ENCODE measurements at regions of chr22 and their contacts with region 1.

Region 1: DNA sequence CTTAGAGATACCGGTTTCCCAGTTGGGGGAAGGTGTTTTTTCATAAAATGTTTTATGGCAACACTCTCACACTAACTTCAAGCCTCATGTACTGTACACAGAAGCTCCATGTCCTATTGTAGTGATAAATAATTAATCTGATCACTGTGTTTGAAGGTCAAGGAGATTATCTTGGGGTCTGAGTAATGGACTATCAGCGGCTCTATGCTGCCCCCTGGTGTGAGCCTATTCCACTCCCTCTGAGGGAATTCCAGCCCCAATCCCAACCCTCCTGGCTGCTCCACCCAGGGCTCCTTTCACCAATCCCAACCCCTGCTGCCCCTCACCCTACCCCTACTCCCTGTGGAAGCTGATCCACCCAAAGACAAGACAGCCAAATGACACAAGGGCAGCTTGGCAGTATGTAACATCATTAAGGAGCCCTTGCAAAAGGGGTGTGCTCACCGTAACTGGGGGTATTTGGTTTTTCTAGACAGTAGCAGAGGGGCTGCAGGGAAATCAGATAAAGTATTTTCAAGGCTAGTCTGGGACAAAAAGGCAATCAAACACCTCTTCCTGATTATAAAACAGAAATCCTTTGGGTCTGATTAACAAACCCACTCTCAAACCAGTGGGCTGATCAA is 22.3 kb downstream of the HPS4 start:
- H3K4me3 ChIP-seq: no peak overlapping the region
- H3K27ac ChIP-seq: no peak overlapping the region
- H3K4me1 ChIP-seq: no peaks in the 10 kb centered on the region; the same call in 1 of the 2 replicates
- CTCF ChIP-seq: peak; percentile 56

Region 2: DNA sequence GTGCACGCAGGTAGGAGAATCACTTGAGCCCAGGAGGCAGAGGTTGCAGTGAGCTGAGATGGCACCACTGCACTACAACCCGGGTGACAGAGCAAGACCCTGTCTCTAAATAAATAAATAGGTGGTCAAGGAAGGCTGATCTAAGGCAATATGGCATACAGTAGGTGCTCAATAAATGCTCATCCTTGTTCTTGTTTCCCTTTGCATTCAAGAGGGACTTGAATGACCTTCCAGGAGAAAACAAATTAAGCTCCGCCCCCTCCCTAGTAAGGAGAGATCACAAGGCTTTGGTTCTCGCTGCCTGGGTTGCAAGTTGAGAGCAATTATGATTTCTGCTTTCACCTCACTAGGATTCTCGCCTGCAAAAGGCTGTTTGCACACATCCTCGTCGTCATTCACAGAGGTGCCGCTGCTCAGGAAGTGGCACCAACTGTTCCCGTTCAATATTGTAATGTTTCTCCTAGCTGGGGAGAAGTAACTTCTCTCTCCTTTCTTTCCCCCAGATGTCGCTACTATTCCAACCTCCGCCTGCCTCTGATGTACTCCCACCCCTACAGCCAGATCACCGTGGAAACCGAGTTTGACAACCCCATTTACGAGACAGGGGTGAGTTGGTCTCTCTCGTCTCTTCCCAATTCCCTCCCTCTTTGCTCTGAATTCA is 84.0 kb before region 1 on chr22:
- CTCF ChIA-PET with region 1: interaction called, 18 read pairs
- POLR2A ChIA-PET with region 1: no interaction called
- H3K4me3 ChIP-seq: no peak overlapping the region
- H3K27ac ChIP-seq: no peak overlapping the region
- H3K4me1 ChIP-seq: no peaks in the 10 kb centered on the region
- CTCF ChIP-seq: peak; percentile 75

Region 3: GRCh38 chr22:26398741-26399153 is 62.6 kb before region 1 on chr22:
- CTCF ChIA-PET with region 1: interaction called, 267 read pairs
- POLR2A ChIA-PET with region 1: no interaction called
- H3K4me3 ChIP-seq: no peak overlapping the region
- H3K27ac ChIP-seq: no peak overlapping the region
- H3K4me1 ChIP-seq: no peaks in the 10 kb centered on the region
- CTCF ChIP-seq: peak; percentile 61; the same call in 1 of the 2 replicates

Region 4: GRCh38 chr22:26416670-26417250 is 44.5 kb before region 1 on chr22:
- CTCF ChIA-PET with region 1: interaction called, 18 read pairs
- POLR2A ChIA-PET with region 1: no interaction called
- H3K4me3 ChIP-seq: 0 out of 2 replicates have a peak overlapping the region, but pooled peaks have one; percentile 2
- H3K27ac ChIP-seq: no peak overlapping the region
- H3K4me1 ChIP-seq: no peaks in the 10 kb centered on the region
- CTCF ChIP-seq: no peak

Region 5: GRCh38 chr22:26445577-26446275 is 15.6 kb before region 1 on chr22:
- CTCF ChIA-PET with region 1: interaction called, 24 read pairs
- POLR2A ChIA-PET with region 1: no interaction called
- H3K4me3 ChIP-seq: no peak overlapping the region
- H3K27ac ChIP-seq: no peak overlapping the region
- H3K4me1 ChIP-seq: no peaks in the 10 kb centered on the region
- CTCF ChIP-seq: no peak

Region 6: DNA sequence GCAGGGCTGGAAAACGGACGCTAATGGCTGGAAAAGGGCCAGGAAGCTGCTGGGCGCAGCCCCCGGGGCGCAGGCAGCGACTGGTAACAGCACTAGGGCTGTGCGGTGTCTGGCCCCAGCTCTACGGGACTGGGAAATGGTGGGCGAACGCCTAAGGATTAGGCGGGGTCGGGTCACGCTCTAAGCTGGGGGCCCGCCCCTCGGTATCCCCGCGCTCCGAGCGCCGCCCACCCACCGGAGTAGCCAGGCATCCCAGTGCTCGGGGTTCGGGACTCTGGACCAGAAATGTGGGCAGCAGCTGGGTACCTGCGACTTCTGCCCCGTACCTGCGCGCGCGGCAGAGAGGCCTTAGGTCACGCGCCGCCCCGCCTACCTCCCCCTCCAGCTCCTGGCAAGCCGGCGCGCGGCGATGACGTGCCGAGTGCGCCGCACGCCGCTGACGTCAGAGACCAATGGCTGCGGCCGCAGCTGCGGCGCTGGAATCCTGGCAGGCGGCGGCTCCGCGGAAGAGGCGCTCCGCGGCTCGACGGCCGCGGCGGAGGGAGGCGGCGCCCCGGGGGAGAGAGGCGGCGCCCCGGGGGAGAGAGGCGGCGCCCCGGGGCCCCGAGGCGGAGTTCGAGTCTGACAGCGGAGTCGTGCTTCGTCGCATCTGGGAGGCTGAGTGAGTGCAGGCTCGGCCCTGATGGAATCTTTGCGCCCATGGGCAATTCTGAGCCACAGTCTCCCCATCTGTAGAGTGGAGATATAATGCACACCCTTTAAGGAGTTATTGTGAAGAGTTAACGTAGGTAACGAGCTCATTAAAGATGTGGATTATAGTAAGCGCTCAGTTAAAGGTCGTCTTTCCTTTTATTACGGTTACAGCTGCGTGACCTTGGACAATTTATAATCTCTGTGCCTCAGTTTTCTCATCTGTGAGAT is 22.4 kb after region 1 on chr22 and contains the starts of genes HPS4 and SRRD:
- CTCF ChIA-PET with region 1: interaction called, 47 read pairs
- POLR2A ChIA-PET with region 1: no interaction called
- H3K4me3 ChIP-seq: peak within 1 kb of the TSS; percentile 93
- H3K27ac ChIP-seq: peak within 1 kb of the TSS; percentile 44; the same call in 1 of the 2 replicates
- H3K4me1 ChIP-seq: peaks cover 4% of the 10 kb centered on the region; the same call in 1 of the 2 replicates
- CTCF ChIP-seq: no peak

Measured in HEK293 (cell line).